ENCODE measurements at regions of chr20 and their contacts with region 1.

Region 1: GRCh38 chr20:50516180-50516934 is 6.2 kb downstream of the PTPN1 start:
- DNase-seq: no peak
- ATAC-seq: peak; percentile 78
- H3K4me3 Mint-ChIP-seq: peak overlapping the region; percentile 90
- H3K27ac Mint-ChIP-seq: peak overlapping the region; percentile 96
- H3K4me1 Mint-ChIP-seq: peaks cover 95% of the 10 kb centered on the region
- H3K27me3 Mint-ChIP-seq: no peaks in the 10 kb centered on the region
- CTCF ChIP-seq: no peak

Region 2: GRCh38 chr20:50498081-50498776 is 18.1 kb before region 1 on chr20:
- CTCF ChIA-PET with region 1: interaction called, 8 read pairs
- POLR2A ChIA-PET with region 1: interaction called, 1,679 read pairs
- intact Hi-C with region 1: loop called (anchors 1 kb)
- DNase-seq: no peak
- ATAC-seq: peak; percentile 81
- H3K4me3 Mint-ChIP-seq: peak overlapping the region; percentile 71
- H3K27ac Mint-ChIP-seq: peak overlapping the region; percentile 99
- H3K4me1 Mint-ChIP-seq: peaks cover 49% of the 10 kb centered on the region
- H3K27me3 Mint-ChIP-seq: no peaks in the 10 kb centered on the region
- CTCF ChIP-seq: no peak

Region 3: GRCh38 chr20:50528804-50529351 is 12.5 kb after region 1 on chr20:
- CTCF ChIA-PET with region 1: interaction called, 3 read pairs
- POLR2A ChIA-PET with region 1: interaction called, 1,679 read pairs
- intact Hi-C with region 1: loop called (anchors 1 kb)
- DNase-seq: no peak
- ATAC-seq: peak; percentile 45
- H3K4me3 Mint-ChIP-seq: peak overlapping the region; percentile 63
- H3K27ac Mint-ChIP-seq: no peak overlapping the region
- H3K4me1 Mint-ChIP-seq: peaks cover 36% of the 10 kb centered on the region
- H3K27me3 Mint-ChIP-seq: no peaks in the 10 kb centered on the region
- CTCF ChIP-seq: no peak

Region 4: DNA sequence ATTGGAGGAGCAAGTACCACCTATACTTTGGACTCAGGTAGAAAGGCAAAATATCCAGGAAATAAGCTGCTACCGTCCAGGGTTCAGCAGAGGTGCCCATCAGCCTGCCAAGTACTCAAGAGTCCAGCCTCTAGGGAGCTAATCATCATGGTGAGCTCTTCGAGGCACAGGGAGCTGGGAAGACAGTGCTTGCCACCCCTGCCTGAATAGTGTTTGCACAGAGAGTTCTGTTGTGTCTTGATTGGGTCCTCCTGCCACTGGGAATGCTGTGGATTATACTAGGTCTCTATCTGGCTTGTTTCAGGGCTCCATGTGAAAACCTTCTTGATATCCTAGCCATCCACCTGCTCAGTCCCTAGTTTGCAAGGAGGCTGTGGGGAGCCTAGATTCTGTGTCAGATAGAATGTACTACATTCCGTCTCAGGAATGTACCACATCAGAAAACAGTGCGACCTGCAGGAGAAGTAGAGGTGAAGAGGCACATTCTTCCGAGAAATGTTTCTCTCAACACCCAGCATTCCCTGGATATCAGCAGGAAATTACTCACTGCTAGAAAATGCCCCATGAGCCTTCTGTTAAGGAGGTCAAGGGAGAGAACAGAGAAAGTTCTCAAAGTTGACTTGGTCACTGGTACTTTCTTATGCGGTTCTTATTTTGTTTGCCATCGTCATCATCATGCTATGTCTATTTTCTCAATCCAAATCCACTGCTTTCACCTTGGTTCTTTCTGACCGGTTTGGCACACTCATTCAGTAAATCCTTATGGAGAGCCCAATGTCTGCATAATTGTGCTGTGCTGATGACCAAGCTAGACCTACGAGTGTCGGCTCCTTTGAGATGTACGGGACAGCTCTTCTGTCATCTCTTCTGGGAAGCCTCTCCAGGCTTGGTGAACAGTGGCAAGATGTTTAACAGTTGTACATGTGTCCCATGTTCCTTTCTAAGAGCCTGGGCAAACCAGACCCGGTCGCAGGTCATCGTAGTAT is 24.6 kb after region 1 on chr20:
- CTCF ChIA-PET with region 1: interaction called, 7 read pairs
- POLR2A ChIA-PET with region 1: interaction called, 1,679 read pairs
- intact Hi-C with region 1: loop called (anchors 1 kb)
- DNase-seq: no peak
- ATAC-seq: no peak
- H3K4me3 Mint-ChIP-seq: peak overlapping the region; percentile 73
- H3K27ac Mint-ChIP-seq: peak overlapping the region; percentile 85
- H3K4me1 Mint-ChIP-seq: peaks cover 89% of the 10 kb centered on the region
- H3K27me3 Mint-ChIP-seq: no peaks in the 10 kb centered on the region
- CTCF ChIP-seq: no peak